Lower lobe of right lung (tissue), 2 donors: ENCODE measurements at regions of chr10 and their contacts with region 1.

Region 1: GRCh38 chr10:80144067-80144695 is 11.7 kb downstream of the PLAC9 start:
- DNase-seq: no peak
- ATAC-seq: peak; percentile 65 to 72
- H3K4me3 ChIP-seq: peak overlapping the region; percentile 17
- H3K27ac ChIP-seq: peak overlapping the region; percentile 1
- H3K4me1 ChIP-seq: peaks cover 18% of the 10 kb centered on the region
- H3K27me3 ChIP-seq: no peaks in the 10 kb centered on the region
- CTCF ChIP-seq: no peak

Region 2: GRCh38 chr10:80015911-80016830 is 128.0 kb before region 1 on chr10:
- intact Hi-C with region 1: no loop called
- DNase-seq: no peak
- ATAC-seq: no peak
- H3K4me3 ChIP-seq: no peak overlapping the region
- H3K27ac ChIP-seq: no peak overlapping the region
- H3K4me1 ChIP-seq: no peaks in the 10 kb centered on the region
- H3K27me3 ChIP-seq: no peaks in the 10 kb centered on the region
- CTCF ChIP-seq: no peak

Region 3: GRCh38 chr10:80205478-80206276 is 61.5 kb after region 1 on chr10 and contains the start of gene ANXA11:
- intact Hi-C with region 1: loop called (anchors 10 kb)
- DNase-seq: peak; percentile 91
- ATAC-seq: peak; percentile 88 to 91
- H3K4me3 ChIP-seq: peak within 1 kb of the TSS; percentile 71
- H3K27ac ChIP-seq: peak within 1 kb of the TSS; percentile 99
- H3K4me1 ChIP-seq: peaks cover 49% of the 10 kb centered on the region
- H3K27me3 ChIP-seq: no peaks in the 10 kb centered on the region
- CTCF ChIP-seq: no peak
- total RNA-seq, gene ANXA11: 306 TPM